ENCODE measurements at regions of chr19 and their contacts with region 1.

Region 1: GRCh38 chr19:46860125-46860845 is 512 bp upstream of the ARHGAP35 start:
- DNase-seq: peak; percentile 97
- ATAC-seq: peak; percentile 81
- H3K4me3 ChIP-seq: peak overlapping the region in 4 of 5 experiments; percentile 68 to 79 (median 77)
- H3K4me3 Mint-ChIP-seq: peak overlapping the region; percentile 91
- H3K27ac ChIP-seq: peak overlapping the region; percentile 71 to 77
- H3K27ac Mint-ChIP-seq: peak overlapping the region; percentile 95
- H3K4me1 ChIP-seq: peaks cover 40 to 41% of the 10 kb centered on the region in 2 donors
- H3K4me1 Mint-ChIP-seq: peaks cover 22% of the 10 kb centered on the region
- H3K27me3 ChIP-seq: no peaks in the 10 kb centered on the region
- H3K27me3 Mint-ChIP-seq: no peaks in the 10 kb centered on the region
- CTCF ChIP-seq: no peak

Region 2: DNA sequence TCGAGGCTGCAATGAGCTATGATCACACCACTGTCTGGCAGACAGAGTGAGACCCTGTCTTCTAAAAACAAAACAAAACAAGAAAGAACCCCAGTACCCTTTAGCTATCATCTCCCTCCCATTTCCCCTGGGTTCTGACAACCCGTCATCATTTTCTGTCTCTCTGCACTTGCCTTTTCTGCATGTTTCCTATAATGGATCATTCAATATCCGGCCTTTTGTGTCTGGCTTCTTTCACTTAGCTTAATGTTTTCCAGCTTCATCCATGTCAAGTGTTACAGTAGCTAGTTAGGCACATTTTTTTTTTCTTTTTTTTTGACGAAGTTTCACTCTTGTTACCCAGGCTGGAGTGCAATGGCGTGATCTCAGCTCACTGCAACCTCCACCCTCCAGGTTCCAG is 26.2 kb before region 1 on chr19:
- CTCF ChIA-PET with region 1: no interaction called
- POLR2A ChIA-PET with region 1: no interaction called
- intact Hi-C with region 1: no loop called
- DNase-seq: no peak
- ATAC-seq: no peak
- H3K4me3 ChIP-seq: no peak overlapping the region
- H3K4me3 Mint-ChIP-seq: no peak overlapping the region
- H3K27ac ChIP-seq: no peak overlapping the region
- H3K27ac Mint-ChIP-seq: no peak overlapping the region
- H3K4me1 ChIP-seq: no peaks in the 10 kb centered on the region
- H3K4me1 Mint-ChIP-seq: no peaks in the 10 kb centered on the region
- H3K27me3 ChIP-seq: no peaks in the 10 kb centered on the region
- H3K27me3 Mint-ChIP-seq: no peaks in the 10 kb centered on the region
- CTCF ChIP-seq: no peak

Region 3: DNA sequence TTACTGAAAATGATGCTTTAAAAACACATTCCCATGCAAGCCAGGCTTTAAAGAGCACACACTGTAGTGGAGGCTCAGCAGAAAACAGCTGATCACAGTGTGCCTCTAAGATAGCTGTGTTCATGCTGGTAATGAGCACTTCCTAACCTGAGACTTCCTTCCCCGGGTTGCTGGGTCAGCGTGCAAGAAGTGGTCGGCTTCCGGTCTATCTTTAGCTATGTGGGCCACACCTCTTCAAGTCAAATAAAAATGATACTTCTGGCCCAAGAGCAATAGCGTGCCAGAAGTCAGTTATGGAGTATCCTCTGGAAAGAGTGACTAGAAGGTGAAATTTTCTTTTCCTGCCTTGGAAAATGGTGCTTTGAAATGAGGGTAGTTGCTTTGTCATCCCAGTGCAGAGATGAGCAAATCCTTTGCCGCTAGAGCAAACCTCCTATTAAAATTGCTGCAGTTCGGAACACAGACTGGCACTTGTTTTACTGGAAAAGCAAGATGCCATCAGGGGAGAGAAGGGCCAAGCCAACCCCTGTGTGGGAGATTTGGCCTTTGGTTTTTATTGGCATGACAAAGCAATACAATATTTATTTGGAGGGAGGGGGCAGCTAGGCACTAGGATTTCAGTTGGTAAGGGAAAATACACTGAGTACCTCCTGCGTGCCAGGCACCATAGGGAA is 64.7 kb after region 1 on chr19:
- CTCF ChIA-PET with region 1: no interaction called
- POLR2A ChIA-PET with region 1: no interaction called
- intact Hi-C with region 1: no loop called
- DNase-seq: peak; percentile 13
- ATAC-seq: peak; percentile 41
- H3K4me3 ChIP-seq: peak overlapping the region in 2 of 5 experiments; percentile 1 to 30
- H3K4me3 Mint-ChIP-seq: peak overlapping the region; percentile 66
- H3K27ac ChIP-seq: peak overlapping the region in 1 of 2 donors; percentile 12
- H3K27ac Mint-ChIP-seq: no peak overlapping the region
- H3K4me1 ChIP-seq: peaks cover 20 to 22% of the 10 kb centered on the region in 2 donors
- H3K4me1 Mint-ChIP-seq: peaks cover 41% of the 10 kb centered on the region
- H3K27me3 ChIP-seq: no peaks in the 10 kb centered on the region
- H3K27me3 Mint-ChIP-seq: no peaks in the 10 kb centered on the region
- CTCF ChIP-seq: no peak

Region 4: GRCh38 chr19:46935066-46935663 is 74.9 kb after region 1 on chr19:
- CTCF ChIA-PET with region 1: no interaction called
- POLR2A ChIA-PET with region 1: no interaction called
- intact Hi-C with region 1: no loop called
- DNase-seq: no peak
- ATAC-seq: no peak
- H3K4me3 ChIP-seq: no peak overlapping the region
- H3K4me3 Mint-ChIP-seq: peak overlapping the region; percentile 18
- H3K27ac ChIP-seq: no peak overlapping the region
- H3K27ac Mint-ChIP-seq: peak overlapping the region; percentile 8
- H3K4me1 ChIP-seq: peaks cover 10% of the 10 kb centered on the region in 2 donors
- H3K4me1 Mint-ChIP-seq: peaks cover 33% of the 10 kb centered on the region
- H3K27me3 ChIP-seq: no peaks in the 10 kb centered on the region
- H3K27me3 Mint-ChIP-seq: no peaks in the 10 kb centered on the region
- CTCF ChIP-seq: no peak

Region 5: DNA sequence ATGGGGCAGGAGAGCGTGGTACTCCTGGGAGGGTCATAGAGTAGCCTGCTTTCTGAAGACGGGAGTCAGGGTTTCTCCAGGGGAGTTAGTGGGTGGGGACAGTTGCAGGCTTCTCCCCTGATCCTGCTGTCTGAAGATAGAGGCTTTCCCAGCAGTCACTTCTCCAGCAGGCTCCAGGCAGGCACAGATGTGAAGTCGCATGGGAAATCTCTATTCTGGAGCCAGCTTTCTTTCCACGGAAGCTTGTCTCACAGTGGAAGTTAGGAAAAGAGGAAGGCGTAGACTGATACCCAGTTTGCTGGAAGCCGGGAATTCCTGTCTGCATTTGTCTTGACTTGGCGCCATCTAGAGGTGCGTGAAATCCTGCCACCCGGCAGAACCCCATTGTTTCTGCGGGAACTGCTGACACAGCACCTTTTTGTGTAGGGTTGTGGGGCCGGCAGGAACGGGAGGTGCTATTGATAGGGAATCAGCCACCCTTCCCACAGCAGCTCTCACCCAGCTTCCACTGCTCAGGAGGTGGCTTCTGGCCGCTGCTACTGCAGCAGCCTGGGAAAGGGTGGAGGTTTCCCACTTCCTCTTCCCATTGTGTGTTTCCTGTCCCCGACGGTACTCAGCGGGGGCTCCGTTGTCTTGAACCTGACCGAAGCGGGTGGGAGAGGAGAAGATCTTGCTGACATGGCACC is 130.8 kb after region 1 on chr19:
- CTCF ChIA-PET with region 1: interaction called, 38 read pairs
- POLR2A ChIA-PET with region 1: no interaction called
- intact Hi-C with region 1: loop called (anchors 2 kb)
- DNase-seq: peak; percentile 51
- ATAC-seq: no peak
- H3K4me3 ChIP-seq: no peak overlapping the region
- H3K4me3 Mint-ChIP-seq: no peak overlapping the region
- H3K27ac ChIP-seq: no peak overlapping the region
- H3K27ac Mint-ChIP-seq: no peak overlapping the region
- H3K4me1 ChIP-seq: peaks cover 6 to 8% of the 10 kb centered on the region in 2 donors
- H3K4me1 Mint-ChIP-seq: peaks cover 10% of the 10 kb centered on the region
- H3K27me3 ChIP-seq: no peaks in the 10 kb centered on the region
- H3K27me3 Mint-ChIP-seq: no peaks in the 10 kb centered on the region
- CTCF ChIP-seq: peak; percentile 61

Region 6: DNA sequence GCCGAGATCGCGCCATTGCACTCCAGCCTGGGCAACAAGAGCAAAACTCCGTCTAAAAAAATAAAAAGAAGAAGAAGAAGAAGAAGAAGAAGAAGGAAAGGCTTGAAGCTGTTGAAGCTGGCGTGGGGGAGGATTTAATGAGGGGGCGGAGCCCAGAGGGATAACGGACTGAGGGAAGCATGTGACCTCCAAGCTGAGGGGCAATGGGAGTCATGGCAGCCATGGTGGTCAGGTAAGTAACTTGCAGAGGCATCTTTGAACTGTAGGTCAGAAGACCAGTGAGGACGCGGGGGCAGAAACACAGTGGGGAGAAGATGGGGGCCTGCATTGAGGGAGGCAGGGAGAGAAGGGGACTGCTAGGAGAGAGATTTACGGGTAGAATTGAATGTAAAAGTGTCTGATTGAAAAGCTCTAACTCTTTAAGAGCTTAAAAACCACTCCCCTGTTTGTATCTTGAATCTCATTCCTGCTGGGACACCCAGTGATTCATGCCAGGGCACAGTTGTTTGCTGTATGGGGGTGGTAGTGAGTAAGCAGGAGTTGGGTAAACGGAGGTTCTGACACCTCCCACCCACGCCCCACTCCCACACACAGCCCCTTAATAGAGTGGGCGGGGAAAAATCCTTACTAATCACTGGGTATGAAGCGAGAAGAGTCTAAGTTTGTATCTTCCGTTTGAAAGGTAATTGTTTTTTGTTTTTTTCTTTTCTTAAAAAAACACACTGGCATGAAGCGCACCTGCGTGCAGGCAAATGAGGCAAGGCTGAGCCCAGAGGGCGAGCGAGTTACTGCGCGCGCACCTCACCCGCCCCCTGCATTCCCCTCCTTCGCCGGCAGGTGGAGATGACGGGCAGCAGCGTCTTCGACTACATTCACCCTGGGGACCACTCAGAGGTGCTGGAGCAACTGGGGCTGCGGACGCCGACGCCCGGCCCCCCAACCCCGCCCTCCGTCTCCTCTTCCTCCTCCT is 175.1 kb after region 1 on chr19:
- CTCF ChIA-PET with region 1: interaction called, 18 read pairs
- POLR2A ChIA-PET with region 1: interaction called, 4 read pairs
- intact Hi-C with region 1: loop called (anchors 1 kb)
- DNase-seq: peak; percentile 97
- ATAC-seq: peak; percentile 98
- H3K4me3 ChIP-seq: peak overlapping the region; percentile 36 to 69 (median 56)
- H3K4me3 Mint-ChIP-seq: peak overlapping the region; percentile 93
- H3K27ac ChIP-seq: no peak overlapping the region
- H3K27ac Mint-ChIP-seq: peak overlapping the region; percentile 80
- H3K4me1 ChIP-seq: peaks cover 18 to 19% of the 10 kb centered on the region in 2 donors
- H3K4me1 Mint-ChIP-seq: peaks cover 20% of the 10 kb centered on the region
- H3K27me3 ChIP-seq: peaks cover 0 to 20% (median 1%) of the 10 kb centered on the region in 4 experiments
- H3K27me3 Mint-ChIP-seq: peaks cover 13% of the 10 kb centered on the region
- CTCF ChIP-seq: peak; percentile 97

Region 7: GRCh38 chr19:47130591-47131227 is 270.4 kb after region 1 on chr19 and contains the start of gene SAE1:
- CTCF ChIA-PET with region 1: no interaction called
- POLR2A ChIA-PET with region 1: no interaction called
- intact Hi-C with region 1: loop called (anchors 5 kb)
- DNase-seq: peak; percentile 97
- ATAC-seq: peak; percentile 89
- H3K4me3 ChIP-seq: peak within 1 kb of the TSS; percentile 50 to 98 (median 88)
- H3K4me3 Mint-ChIP-seq: peak within 1 kb of the TSS; percentile 97
- H3K27ac ChIP-seq: peak within 1 kb of the TSS; percentile 76 to 89
- H3K27ac Mint-ChIP-seq: peak within 1 kb of the TSS; percentile 98
- H3K4me1 ChIP-seq: peaks cover 0 to 21% of the 10 kb centered on the region in 2 donors
- H3K4me1 Mint-ChIP-seq: peaks cover 39% of the 10 kb centered on the region
- H3K27me3 ChIP-seq: no peaks in the 10 kb centered on the region
- H3K27me3 Mint-ChIP-seq: no peaks in the 10 kb centered on the region
- CTCF ChIP-seq: peak; percentile 65
- total RNA-seq, gene SAE1: 41.0 and 45.1 TPM in 2 replicates

Region 8: GRCh38 chr19:47256688-47257443 is 396.6 kb after region 1 on chr19:
- CTCF ChIA-PET with region 1: no interaction called
- POLR2A ChIA-PET with region 1: interaction called, 6 read pairs
- intact Hi-C with region 1: loop called (anchors 10 kb)
- DNase-seq: peak; percentile 98
- ATAC-seq: peak; percentile 77
- H3K4me3 ChIP-seq: peak overlapping the region; percentile 38 to 71 (median 62)
- H3K4me3 Mint-ChIP-seq: peak overlapping the region; percentile 92
- H3K27ac ChIP-seq: peak overlapping the region; percentile 73 to 94
- H3K27ac Mint-ChIP-seq: peak overlapping the region; percentile 95
- H3K4me1 ChIP-seq: peaks cover 14 to 20% of the 10 kb centered on the region in 2 donors
- H3K4me1 Mint-ChIP-seq: peaks cover 40% of the 10 kb centered on the region
- H3K27me3 ChIP-seq: no peaks in the 10 kb centered on the region
- H3K27me3 Mint-ChIP-seq: no peaks in the 10 kb centered on the region
- CTCF ChIP-seq: no peak